WTC11 (cell line): ENCODE measurements at regions of chr20 and their contacts with region 1.

Region 1: GRCh38 chr20:45044084-45044573 is 56.8 kb downstream of the KCNS1 start:
- DNase-seq: no peak
- ATAC-seq: peak; percentile 81
- H3K4me3 Mint-ChIP-seq: no peak overlapping the region
- H3K27ac Mint-ChIP-seq: peak overlapping the region; percentile 37
- H3K4me1 Mint-ChIP-seq: peaks cover 47% of the 10 kb centered on the region
- H3K27me3 Mint-ChIP-seq: no peaks in the 10 kb centered on the region
- CTCF ChIP-seq: peak; percentile 38

Region 2: DNA sequence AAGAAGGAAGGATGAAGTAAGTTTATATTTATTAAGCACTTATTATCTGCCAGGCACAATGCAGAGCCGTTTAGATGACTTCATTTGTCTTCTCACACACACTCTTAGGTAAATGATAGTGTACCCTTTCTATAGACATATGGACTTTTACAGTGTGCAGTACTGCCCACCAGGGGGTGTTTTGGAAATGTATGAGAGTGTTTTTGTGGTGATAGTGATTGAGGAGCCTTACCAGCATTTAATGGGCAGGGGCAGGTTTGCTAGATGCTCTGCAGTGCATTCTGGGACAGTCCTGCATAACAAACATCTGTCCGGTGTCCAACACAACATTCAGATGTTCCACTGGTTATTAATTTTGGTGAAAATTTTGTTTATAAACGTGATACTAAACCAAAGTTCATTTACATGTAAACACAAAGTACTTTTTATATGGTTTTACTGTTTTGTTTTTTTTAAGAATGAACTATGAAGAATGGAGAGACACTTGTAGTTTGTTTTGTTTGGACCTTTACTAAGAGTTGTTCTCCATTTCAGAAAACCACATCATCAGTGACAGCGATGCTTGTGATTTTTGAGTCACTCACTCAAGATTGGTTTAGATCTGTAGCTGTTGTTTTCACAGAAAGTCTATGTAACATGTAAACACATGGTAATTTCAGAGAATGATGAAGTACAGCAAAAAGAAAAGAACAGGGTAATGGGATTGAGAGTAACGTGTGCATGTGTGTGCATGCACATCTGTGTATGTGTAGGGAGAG is 36.9 kb after region 1 on chr20:
- CTCF ChIA-PET with region 1: interaction called, 12 read pairs
- POLR2A ChIA-PET with region 1: interaction called, 3 read pairs
- DNase-seq: no peak
- ATAC-seq: no peak
- H3K4me3 Mint-ChIP-seq: no peak overlapping the region
- H3K27ac Mint-ChIP-seq: no peak overlapping the region
- H3K4me1 Mint-ChIP-seq: peaks cover 17% of the 10 kb centered on the region
- H3K27me3 Mint-ChIP-seq: no peaks in the 10 kb centered on the region
- CTCF ChIP-seq: no peak

Region 3: DNA sequence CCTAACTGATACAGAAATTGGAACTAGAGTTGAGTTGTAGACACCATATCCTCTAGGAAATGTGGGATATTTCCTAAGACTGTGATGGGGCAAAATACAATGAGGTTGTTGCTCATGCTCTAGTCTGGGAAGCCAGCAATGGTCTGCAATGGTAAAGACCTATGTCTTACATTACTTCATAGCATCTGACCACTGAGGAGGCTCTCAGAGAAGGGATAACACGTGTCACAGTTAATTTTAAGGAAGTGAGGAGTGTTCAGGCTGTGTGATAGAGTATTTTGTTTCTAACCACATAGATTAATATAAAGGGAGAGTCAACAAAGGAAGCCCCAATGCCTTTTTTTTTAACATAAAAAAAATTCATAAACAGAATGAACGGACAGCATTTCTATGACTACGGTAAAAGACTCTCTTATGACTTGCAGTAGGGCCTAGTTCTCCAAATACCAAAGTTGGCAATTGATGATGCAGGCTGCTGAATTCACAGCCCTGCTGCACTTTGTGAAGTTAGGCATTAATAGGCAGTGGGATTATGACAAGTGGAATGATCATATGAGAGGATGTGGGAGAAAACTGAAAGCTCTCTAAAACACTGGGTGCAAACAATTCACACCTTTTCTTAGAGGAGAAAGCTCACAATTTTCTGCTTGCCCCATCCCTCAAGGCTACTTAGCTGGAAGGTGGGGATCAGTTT is 43.1 kb after region 1 on chr20:
- CTCF ChIA-PET with region 1: interaction called, 103 read pairs
- POLR2A ChIA-PET with region 1: interaction called, 3 read pairs
- DNase-seq: no peak
- ATAC-seq: no peak
- H3K4me3 Mint-ChIP-seq: no peak overlapping the region
- H3K27ac Mint-ChIP-seq: no peak overlapping the region
- H3K4me1 Mint-ChIP-seq: peaks cover 12% of the 10 kb centered on the region
- H3K27me3 Mint-ChIP-seq: no peaks in the 10 kb centered on the region
- CTCF ChIP-seq: no peak

Region 4: GRCh38 chr20:45095753-45096371 is 51.7 kb after region 1 on chr20:
- CTCF ChIA-PET with region 1: interaction called, 103 read pairs
- POLR2A ChIA-PET with region 1: no interaction called
- DNase-seq: peak; percentile 70
- ATAC-seq: peak; percentile 50
- H3K4me3 Mint-ChIP-seq: no peak overlapping the region
- H3K27ac Mint-ChIP-seq: no peak overlapping the region
- H3K4me1 Mint-ChIP-seq: peaks cover 12% of the 10 kb centered on the region
- H3K27me3 Mint-ChIP-seq: peaks cover 48% of the 10 kb centered on the region
- CTCF ChIP-seq: peak; percentile 66; the same call in 1 of the 2 replicates

Region 5: GRCh38 chr20:45111799-45112471 is 67.8 kb after region 1 on chr20:
- CTCF ChIA-PET with region 1: interaction called, 60 read pairs
- POLR2A ChIA-PET with region 1: no interaction called
- DNase-seq: peak; percentile 52
- ATAC-seq: peak; percentile 54
- H3K4me3 Mint-ChIP-seq: no peak overlapping the region
- H3K27ac Mint-ChIP-seq: no peak overlapping the region
- H3K4me1 Mint-ChIP-seq: peaks cover 8% of the 10 kb centered on the region; the same call in 1 of the 2 replicates
- H3K27me3 Mint-ChIP-seq: peaks cover 4% of the 10 kb centered on the region; the same call in 1 of the 2 replicates
- CTCF ChIP-seq: peak; percentile 71

Region 6: GRCh38 chr20:45157962-45158361 is 113.8 kb after region 1 on chr20:
- CTCF ChIA-PET with region 1: no interaction called
- POLR2A ChIA-PET with region 1: no interaction called
- DNase-seq: no peak
- ATAC-seq: no peak
- H3K4me3 Mint-ChIP-seq: no peak overlapping the region
- H3K27ac Mint-ChIP-seq: no peak overlapping the region
- H3K4me1 Mint-ChIP-seq: no peaks in the 10 kb centered on the region
- H3K27me3 Mint-ChIP-seq: peaks cover 31% of the 10 kb centered on the region
- CTCF ChIP-seq: no peak

Region 7: GRCh38 chr20:45229264-45230056 is 185.3 kb after region 1 on chr20:
- CTCF ChIA-PET with region 1: interaction called, 19 read pairs
- POLR2A ChIA-PET with region 1: no interaction called
- DNase-seq: peak; percentile 90
- ATAC-seq: peak; percentile 96
- H3K4me3 Mint-ChIP-seq: no peak overlapping the region
- H3K27ac Mint-ChIP-seq: no peak overlapping the region
- H3K4me1 Mint-ChIP-seq: no peaks in the 10 kb centered on the region
- H3K27me3 Mint-ChIP-seq: peaks cover 53% of the 10 kb centered on the region
- CTCF ChIP-seq: peak; percentile 85